ENCODE measurements at regions of chr2 and their contacts with region 1.

Region 1: DNA sequence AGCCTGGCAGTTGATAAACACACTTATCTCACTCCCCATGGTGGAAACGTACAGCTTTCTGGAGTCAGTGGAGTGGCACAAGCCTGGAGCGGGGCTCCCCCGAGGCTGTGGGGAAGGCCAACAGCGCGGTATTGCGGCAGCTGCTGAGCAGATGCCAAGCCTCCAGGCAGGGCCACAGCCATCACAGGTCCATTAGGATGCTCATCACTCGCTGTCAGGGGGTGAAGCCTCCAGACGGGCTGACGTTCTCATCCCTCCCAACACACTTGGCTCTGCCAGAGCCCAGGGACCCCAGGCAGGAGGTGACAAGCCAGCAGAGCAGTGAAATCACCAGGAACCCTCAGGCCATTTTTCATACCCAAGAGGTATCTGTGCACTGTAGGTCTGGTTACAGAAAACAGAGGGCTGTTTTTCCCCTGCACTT is 529.2 kb upstream of the KLHL29 start:
- DNase-seq: peak in 40 of 42 donors; percentile 10 to 82 (median 49)

Region 2: GRCh38 chr2:22788749-22789327 is 66.9 kb before region 1 on chr2:
- intact Hi-C with region 1: no loop called
- DNase-seq: no peak

Region 3: GRCh38 chr2:23037596-23037995 is 181.8 kb after region 1 on chr2:
- intact Hi-C with region 1: loop called (anchors 10 kb)
- DNase-seq: peak in 34 of 42 donors; percentile 7 to 85 (median 46)

Region 4: GRCh38 chr2:23135481-23136100 is 279.8 kb after region 1 on chr2:
- intact Hi-C with region 1: no loop called
- DNase-seq: peak in 34 of 42 donors; percentile 1 to 81 (median 34)

Region 5: GRCh38 chr2:23385748-23386338 is 530.1 kb after region 1 on chr2:
- intact Hi-C with region 1: no loop called
- DNase-seq: peak in 17 of 42 donors; percentile 4 to 48 (median 28)